Left lung (tissue), 14 donors: ENCODE measurements at regions of chr5 and their contacts with region 1.

Region 1: GRCh38 chr5:178859625-178860531 is at the start of gene ZNF354B:
- DNase-seq: peak; percentile 84 to 96 (median 93)
- ATAC-seq: peak; percentile 99
- H3K4me3 ChIP-seq: peak within 1 kb of the TSS; percentile 67 to 84
- H3K27ac ChIP-seq: peak within 1 kb of the TSS; percentile 80 to 83
- H3K4me1 ChIP-seq: peaks cover 0 to 20% of the 10 kb centered on the region in 2 donors
- H3K27me3 ChIP-seq: no peaks in the 10 kb centered on the region
- CTCF ChIP-seq: no peak
- polyA plus RNA-seq, gene ZNF354B: 23.1 to 32.9 (median 27.5) TPM

Region 2: GRCh38 chr5:178732281-178732680 is 127.6 kb before region 1 on chr5:
- intact Hi-C with region 1: loop called in 1 of 2 experiments (anchors 10 kb)
- DNase-seq: no peak
- ATAC-seq: no peak
- H3K4me3 ChIP-seq: no peak overlapping the region
- H3K27ac ChIP-seq: peak overlapping the region in 1 of 2 donors; percentile 93
- H3K4me1 ChIP-seq: peaks cover 0 to 14% of the 10 kb centered on the region in 2 donors
- H3K27me3 ChIP-seq: no peaks in the 10 kb centered on the region
- CTCF ChIP-seq: no peak